ENCODE measurements at regions of chr11 and their contacts with region 1.

Region 1: GRCh38 chr11:78542007-78542406 is 32.7 kb downstream of the NARS2 start:
- DNase-seq: no peak
- H3K4me3 ChIP-seq: no peak overlapping the region
- H3K27ac ChIP-seq: no peak overlapping the region
- H3K4me1 ChIP-seq: no peaks in the 10 kb centered on the region
- H3K27me3 ChIP-seq: no peaks in the 10 kb centered on the region
- CTCF ChIP-seq: no peak
- POLR2A ChIP-seq: no peak

Region 2: DNA sequence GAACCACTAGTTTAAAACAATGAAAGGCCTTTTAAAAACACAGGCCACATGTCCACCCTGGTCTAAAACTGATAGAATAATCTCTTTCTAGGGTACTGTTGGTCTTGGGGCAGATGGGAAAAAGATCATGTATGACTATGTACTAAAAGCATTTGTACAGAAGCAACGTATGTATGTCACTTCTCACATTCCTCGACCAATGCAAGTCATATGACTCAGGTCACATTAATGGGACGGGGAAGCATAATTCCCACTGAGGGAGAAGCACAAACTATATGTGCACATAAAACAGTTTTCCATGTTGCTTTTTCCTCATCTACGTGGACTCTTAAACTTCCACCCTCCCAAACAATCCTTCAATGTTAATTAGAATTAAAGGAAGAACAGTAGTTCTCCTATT is 92.1 kb before region 1 on chr11:
- intact Hi-C with region 1: loop called in 1 of 2 experiments (anchors 10 kb)
- DNase-seq: no peak
- H3K4me3 ChIP-seq: no peak overlapping the region
- H3K27ac ChIP-seq: no peak overlapping the region
- H3K4me1 ChIP-seq: no peaks in the 10 kb centered on the region
- H3K27me3 ChIP-seq: no peaks in the 10 kb centered on the region
- CTCF ChIP-seq: no peak
- POLR2A ChIP-seq: no peak

Measured in adrenal gland (tissue), 19 donors.